PC-9 (cell line): ENCODE measurements at regions of chr10 and their contacts with region 1.

Region 1: DNA sequence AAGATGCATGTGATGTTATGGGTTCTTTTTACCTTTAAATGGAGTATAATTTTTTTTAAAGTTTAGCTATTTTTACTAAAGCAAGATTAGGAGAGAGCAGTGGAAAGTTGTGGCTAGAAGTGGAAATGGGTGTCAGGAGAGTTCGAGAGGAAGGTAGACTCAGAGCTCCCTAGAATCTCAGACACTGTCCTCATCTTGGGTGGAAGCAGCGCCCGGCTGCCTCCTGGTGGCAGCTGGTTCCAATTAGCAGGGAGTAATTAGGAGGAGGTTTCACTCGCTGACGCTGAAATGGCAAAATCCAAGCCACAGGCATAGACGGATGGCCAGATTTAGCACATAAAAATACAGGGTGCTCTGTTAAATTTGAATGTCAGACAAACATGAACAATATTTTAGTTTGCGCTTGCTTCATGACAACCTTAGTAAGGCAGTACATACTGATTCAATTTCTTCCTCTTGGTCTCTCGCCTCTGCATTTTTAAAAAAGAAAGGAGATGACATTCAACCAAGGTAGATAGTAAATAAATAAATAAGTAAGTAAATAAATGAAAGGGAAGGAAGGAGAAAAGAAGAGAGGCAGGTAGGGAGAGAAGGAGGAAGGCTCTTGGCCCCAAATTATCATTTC is 58.5 kb downstream of the LGI1 start:
- DNase-seq: peak; percentile 49 to 53
- H3K4me3 ChIP-seq: no peak overlapping the region
- H3K27ac ChIP-seq: no peak overlapping the region
- H3K4me1 ChIP-seq: no peaks in the 10 kb centered on the region
- H3K27me3 ChIP-seq: no peaks in the 10 kb centered on the region
- CTCF ChIP-seq: peak; percentile 76

Region 2: DNA sequence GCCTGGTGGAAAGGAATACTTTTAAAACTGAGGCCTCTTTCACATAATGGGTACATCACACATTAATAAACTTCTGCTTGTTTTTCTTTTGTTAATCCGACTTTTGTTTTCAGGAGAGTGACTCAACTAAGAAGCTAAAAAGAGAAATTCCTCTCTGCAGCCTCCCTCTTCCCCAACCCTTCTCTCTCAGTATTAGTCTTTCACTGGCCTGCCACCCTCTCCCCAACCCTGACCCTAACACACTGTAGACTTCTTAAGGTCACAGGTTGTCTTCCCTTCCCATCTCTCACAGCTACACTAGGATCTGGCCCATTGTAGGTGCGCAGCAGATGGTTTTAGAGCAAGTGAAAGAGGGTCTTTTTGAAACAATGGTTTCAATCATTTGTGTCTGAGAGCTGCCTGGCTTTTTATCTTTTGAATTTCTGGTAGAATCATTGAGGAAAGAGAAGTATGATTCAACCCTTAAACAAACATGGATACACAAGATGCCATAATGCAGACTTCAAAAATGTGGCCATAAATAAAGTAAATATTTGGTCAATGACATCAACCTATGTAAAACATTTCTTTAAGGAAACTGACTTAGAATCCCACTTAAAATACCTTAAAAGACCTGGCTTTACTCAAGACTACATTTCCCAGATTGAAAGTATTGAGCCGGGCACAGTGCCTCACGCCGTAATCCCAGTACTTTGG is 267.7 kb before region 1 on chr10:
- CTCF ChIA-PET with region 1: no interaction called
- POLR2A ChIA-PET with region 1: no interaction called
- intact Hi-C with region 1: loop called (anchors 5 kb)
- DNase-seq: peak in 1 of 2 experiments; percentile 95
- H3K4me3 ChIP-seq: no peak overlapping the region
- H3K27ac ChIP-seq: peak overlapping the region; percentile 91
- H3K4me1 ChIP-seq: peaks cover 21% of the 10 kb centered on the region
- H3K27me3 ChIP-seq: no peaks in the 10 kb centered on the region
- CTCF ChIP-seq: no peak

Region 3: DNA sequence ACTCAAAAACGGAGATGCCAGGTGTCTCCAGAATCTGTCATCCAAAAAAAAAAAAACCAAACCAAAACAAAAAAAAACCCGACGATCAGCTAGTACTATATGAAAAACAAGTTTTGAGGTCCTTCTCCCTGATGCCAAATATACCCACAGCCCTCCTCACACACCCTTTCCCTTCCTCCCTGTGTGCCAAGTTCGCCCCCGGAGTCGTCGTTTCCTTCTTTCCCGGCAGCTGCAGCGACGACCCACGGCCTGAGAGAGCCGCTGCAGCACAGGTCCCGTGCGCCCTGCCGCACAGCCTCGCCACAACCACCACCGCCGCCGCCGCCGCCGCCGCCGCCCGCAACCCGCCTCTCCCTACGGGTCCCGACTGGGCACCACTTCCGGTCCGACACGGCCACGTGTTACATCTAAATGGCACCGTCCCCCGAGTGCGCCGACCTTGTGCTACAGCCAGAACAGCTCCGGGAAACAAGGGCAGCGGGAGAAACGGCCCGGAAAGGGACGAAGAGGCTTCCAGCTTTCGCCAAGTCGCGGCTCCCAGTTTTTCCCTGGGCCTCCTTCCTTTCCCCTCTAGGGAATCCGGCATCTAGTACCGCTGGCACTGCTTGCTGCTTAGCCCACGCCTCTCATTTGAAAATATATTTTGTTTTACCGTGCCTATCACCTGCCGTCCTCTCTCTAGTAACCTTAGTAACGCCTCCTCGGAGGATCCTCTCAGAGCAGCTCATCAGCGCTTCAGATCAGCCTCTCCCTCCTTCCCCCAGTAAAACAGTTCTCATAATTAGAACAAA is 113.8 kb before region 1 on chr10 and contains the start of gene FRA10AC1:
- CTCF ChIA-PET with region 1: interaction called, 7 read pairs
- POLR2A ChIA-PET with region 1: no interaction called
- intact Hi-C with region 1: loop called (anchors 1 kb)
- DNase-seq: peak; percentile 70 to 82
- H3K4me3 ChIP-seq: peak within 1 kb of the TSS; percentile 77
- H3K27ac ChIP-seq: peak within 1 kb of the TSS; percentile 84
- H3K4me1 ChIP-seq: 0 out of 2 replicates have a peak, but pooled peaks cover 10% of the 10 kb centered on the region
- H3K27me3 ChIP-seq: no peaks in the 10 kb centered on the region
- CTCF ChIP-seq: peak; percentile 59
- total RNA-seq, gene FRA10AC1: 5.4 and 10.4 TPM in 2 replicates

Region 4: DNA sequence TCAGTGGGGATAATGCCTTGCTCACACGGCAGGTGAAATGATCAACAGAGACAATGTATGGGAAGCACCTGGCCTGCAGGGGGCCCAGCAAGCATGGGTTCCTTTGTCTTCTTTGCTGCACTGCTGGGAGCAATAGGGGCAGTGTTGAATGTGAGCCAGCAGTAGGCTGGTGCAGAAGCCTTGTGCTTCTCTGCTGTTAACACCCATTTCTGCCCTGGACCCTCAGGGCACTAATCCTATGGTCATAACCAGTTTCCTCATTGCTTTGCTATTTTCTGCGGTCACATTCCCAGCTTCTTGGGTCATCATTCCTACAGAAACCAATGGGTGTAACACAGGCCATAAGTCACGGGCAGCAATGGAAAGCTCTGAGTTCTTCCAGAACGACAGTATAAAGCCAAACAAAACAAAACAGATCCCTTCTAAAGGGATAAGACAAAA is 69.4 kb before region 1 on chr10:
- CTCF ChIA-PET with region 1: interaction called, 21 read pairs
- POLR2A ChIA-PET with region 1: no interaction called
- intact Hi-C with region 1: loop called (anchors 1 kb)
- DNase-seq: peak; percentile 85 to 96
- H3K4me3 ChIP-seq: 0 out of 2 replicates have a peak overlapping the region, but pooled peaks have one; percentile 28
- H3K27ac ChIP-seq: peak overlapping the region; percentile 81
- H3K4me1 ChIP-seq: peaks cover 46% of the 10 kb centered on the region
- H3K27me3 ChIP-seq: no peaks in the 10 kb centered on the region
- CTCF ChIP-seq: peak; percentile 73

Region 5: GRCh38 chr10:93873427-93874115 is 57.3 kb after region 1 on chr10:
- CTCF ChIA-PET with region 1: interaction called, 14 read pairs
- POLR2A ChIA-PET with region 1: no interaction called
- intact Hi-C with region 1: no loop called
- DNase-seq: peak in 1 of 2 experiments; percentile 8
- H3K4me3 ChIP-seq: no peak overlapping the region
- H3K27ac ChIP-seq: peak overlapping the region; percentile 39; the same call in 1 of the 2 replicates
- H3K4me1 ChIP-seq: peaks cover 8% of the 10 kb centered on the region
- H3K27me3 ChIP-seq: no peaks in the 10 kb centered on the region
- CTCF ChIP-seq: no peak

Region 6: GRCh38 chr10:94320285-94320914 is 504.2 kb after region 1 on chr10:
- CTCF ChIA-PET with region 1: no interaction called
- POLR2A ChIA-PET with region 1: no interaction called
- intact Hi-C with region 1: loop called (anchors 2 kb)
- DNase-seq: peak; percentile 14 to 33
- H3K4me3 ChIP-seq: no peak overlapping the region
- H3K27ac ChIP-seq: no peak overlapping the region
- H3K4me1 ChIP-seq: no peaks in the 10 kb centered on the region
- H3K27me3 ChIP-seq: no peaks in the 10 kb centered on the region
- CTCF ChIP-seq: peak; percentile 85

Region 7: GRCh38 chr10:94439275-94439861 is 623.1 kb after region 1 on chr10:
- CTCF ChIA-PET with region 1: interaction called, 13 read pairs
- POLR2A ChIA-PET with region 1: no interaction called
- intact Hi-C with region 1: loop called (anchors 5 kb)
- DNase-seq: no peak
- H3K4me3 ChIP-seq: no peak overlapping the region
- H3K27ac ChIP-seq: no peak overlapping the region
- H3K4me1 ChIP-seq: no peaks in the 10 kb centered on the region
- H3K27me3 ChIP-seq: no peaks in the 10 kb centered on the region
- CTCF ChIP-seq: no peak